Dendritic cell treated with granulocyte-macrophage colony-stimulating factor and Interleukin-4, amounts not matched to agents 40 ng/mL and 50 ng/mL, for 4 days (primary cell): ENCODE measurements at regions of chr19 and their contacts with region 1.

Region 1: GRCh38 chr19:36169084-36169760 is 17.0 kb upstream of the COX7A1 start:
- H3K4me3 Mint-ChIP-seq: no peak overlapping the region
- H3K27ac Mint-ChIP-seq: no peak overlapping the region
- H3K4me1 Mint-ChIP-seq: no peaks in the 10 kb centered on the region
- H3K27me3 Mint-ChIP-seq: no peaks in the 10 kb centered on the region

Region 2: DNA sequence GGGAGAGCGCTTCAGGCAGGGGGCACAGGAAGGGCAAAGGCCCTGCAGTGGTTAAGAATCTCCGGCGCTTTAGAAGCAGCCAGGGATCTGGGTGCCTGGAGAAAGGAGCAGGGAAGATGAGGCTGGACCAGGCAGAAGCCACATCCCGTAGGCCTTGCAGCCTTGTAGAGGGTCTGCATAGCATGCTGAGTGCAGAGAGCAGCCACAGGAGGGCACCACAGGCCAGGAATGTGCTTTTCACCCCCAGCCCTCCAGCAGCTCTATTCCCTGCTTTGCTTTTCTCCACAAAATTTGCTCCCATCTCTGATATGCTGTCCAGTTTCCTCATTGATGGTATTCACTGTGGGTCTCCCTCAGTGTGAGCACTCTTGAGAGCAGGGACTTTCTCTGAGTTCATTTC is 108.8 kb before region 1 on chr19:
- intact Hi-C with region 1: loop called (anchors 2 kb)
- H3K4me3 Mint-ChIP-seq: no peak overlapping the region
- H3K27ac Mint-ChIP-seq: no peak overlapping the region
- H3K4me1 Mint-ChIP-seq: peaks cover 25% of the 10 kb centered on the region
- H3K27me3 Mint-ChIP-seq: no peaks in the 10 kb centered on the region

Region 3: GRCh38 chr19:36132489-36132891 is 36.7 kb before region 1 on chr19:
- intact Hi-C with region 1: loop called (anchors 1 kb)
- H3K4me3 Mint-ChIP-seq: no peak overlapping the region
- H3K27ac Mint-ChIP-seq: peak overlapping the region; percentile 82
- H3K4me1 Mint-ChIP-seq: peaks cover 52% of the 10 kb centered on the region
- H3K27me3 Mint-ChIP-seq: peaks cover 6% of the 10 kb centered on the region